Uterus (tissue), 4 donors: ENCODE measurements at regions of chr22 and their contacts with region 1.

Region 1: GRCh38 chr22:36387752-36388518 is at the start of gene MYH9:
- DNase-seq: peak; percentile 100
- H3K4me3 ChIP-seq: peak within 1 kb of the TSS; percentile 86
- H3K27ac ChIP-seq: peak within 1 kb of the TSS; percentile 96 to 98
- H3K4me1 ChIP-seq: no peaks in the 10 kb centered on the region
- H3K27me3 ChIP-seq: no peaks in the 10 kb centered on the region
- CTCF ChIP-seq: peak in 1 of 4 experiments; percentile 2
- POLR2A ChIP-seq: peak; percentile 100
- total RNA-seq, gene MYH9: 215 to 1,171 (median 400) TPM

Region 2: DNA sequence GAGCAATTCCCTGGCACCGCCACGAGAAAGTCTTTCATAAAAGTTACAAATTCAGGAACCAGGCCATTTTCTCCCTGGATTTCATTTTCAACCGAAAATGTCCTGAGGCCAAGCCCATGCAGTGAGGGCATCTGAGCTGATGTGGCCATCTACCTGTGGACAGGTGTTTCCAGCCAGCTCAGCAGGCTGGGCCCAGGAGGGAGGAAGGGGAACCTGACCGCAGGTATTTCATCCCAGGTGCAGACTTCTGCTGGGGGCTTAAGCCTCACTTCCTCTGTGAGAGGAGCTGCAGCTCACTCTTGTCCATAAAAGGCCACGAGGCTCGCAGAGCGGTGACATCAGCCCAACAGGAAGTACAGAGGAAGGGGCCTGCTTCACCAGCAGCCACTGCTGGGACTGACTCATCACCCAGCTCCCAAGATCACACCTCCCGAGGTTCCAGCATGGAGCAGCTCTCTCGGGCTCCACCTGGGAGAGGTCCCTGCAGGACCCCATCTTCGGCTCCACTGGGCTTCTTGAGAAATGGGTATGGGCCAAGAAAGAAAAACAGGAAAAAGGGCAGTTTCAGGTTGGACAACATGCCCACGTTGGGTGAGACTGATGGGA is 56.5 kb before region 1 on chr22:
- intact Hi-C with region 1: loop called (anchors 5 kb)
- DNase-seq: peak; percentile 85 to 94
- H3K4me3 ChIP-seq: no peak overlapping the region
- H3K27ac ChIP-seq: peak overlapping the region; percentile 95 to 100
- H3K4me1 ChIP-seq: peaks cover 61 to 75% of the 10 kb centered on the region in 2 donors
- H3K27me3 ChIP-seq: no peaks in the 10 kb centered on the region
- CTCF ChIP-seq: peak in 1 of 4 experiments; percentile 3
- POLR2A ChIP-seq: peak; percentile 71 to 88

Region 3: GRCh38 chr22:36454916-36455570 is 67.1 kb after region 1 on chr22:
- intact Hi-C with region 1: loop called (anchors 10 kb)
- DNase-seq: peak; percentile 94 to 95
- H3K4me3 ChIP-seq: peak overlapping the region; percentile 45 to 50
- H3K27ac ChIP-seq: peak overlapping the region; percentile 96 to 97
- H3K4me1 ChIP-seq: peaks cover 0 to 11% of the 10 kb centered on the region in 2 donors
- H3K27me3 ChIP-seq: no peaks in the 10 kb centered on the region
- CTCF ChIP-seq: peak in 2 of 4 experiments; percentile 5 to 41
- POLR2A ChIP-seq: peak; percentile 93 to 94